OCI-LY7 (cell line): ENCODE measurements at regions of chr6 and their contacts with region 1.

Region 1: GRCh38 chr6:72622094-72622940 is 453 bp downstream of the KCNQ5 start:
- DNase-seq: peak; percentile 86
- H3K4me3 ChIP-seq: peak overlapping the region; percentile 92
- H3K27ac ChIP-seq: peak overlapping the region; percentile 96
- H3K4me1 ChIP-seq: peaks cover 43% of the 10 kb centered on the region
- CTCF ChIP-seq: peak; percentile 48; the same call in 1 of the 2 replicates

Region 2: DNA sequence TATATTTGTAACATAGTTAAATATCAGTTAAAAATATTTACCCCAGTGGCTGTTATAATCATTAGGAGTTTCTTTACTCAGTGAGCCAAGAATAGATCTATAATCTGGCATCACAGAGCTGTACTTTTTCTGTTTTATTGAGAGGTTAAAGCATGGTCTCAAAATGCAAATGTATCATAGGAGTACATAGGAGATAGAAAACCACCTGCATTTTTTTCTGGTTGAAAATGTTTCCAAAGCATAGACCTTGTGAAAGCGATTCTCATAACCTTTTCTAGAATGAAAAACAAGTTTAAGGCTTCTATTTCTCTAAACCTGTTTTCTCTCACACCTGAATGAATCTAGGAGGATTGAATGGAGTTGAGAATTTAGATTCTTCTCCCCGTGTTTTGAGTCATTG is 13.9 kb after region 1 on chr6:
- CTCF ChIA-PET with region 1: no interaction called
- POLR2A ChIA-PET with region 1: interaction called, 27 read pairs
- intact Hi-C with region 1: no loop called
- DNase-seq: no peak
- H3K4me3 ChIP-seq: no peak overlapping the region
- H3K27ac ChIP-seq: no peak overlapping the region
- H3K4me1 ChIP-seq: peaks cover 9% of the 10 kb centered on the region
- CTCF ChIP-seq: no peak

Region 3: GRCh38 chr6:72968704-72969103 is 346.4 kb after region 1 on chr6:
- CTCF ChIA-PET with region 1: no interaction called
- POLR2A ChIA-PET with region 1: no interaction called
- intact Hi-C with region 1: no loop called
- DNase-seq: no peak
- H3K4me3 ChIP-seq: no peak overlapping the region
- H3K27ac ChIP-seq: no peak overlapping the region
- H3K4me1 ChIP-seq: no peaks in the 10 kb centered on the region
- CTCF ChIP-seq: no peak

Region 4: GRCh38 chr6:73180763-73181619 is 558.7 kb after region 1 on chr6:
- CTCF ChIA-PET with region 1: interaction called, 4 read pairs
- POLR2A ChIA-PET with region 1: interaction called, 9 read pairs
- intact Hi-C with region 1: loop called (anchors 1 kb)
- DNase-seq: peak; percentile 81
- H3K4me3 ChIP-seq: peak overlapping the region; percentile 48
- H3K27ac ChIP-seq: peak overlapping the region; percentile 46
- H3K4me1 ChIP-seq: peaks cover 54% of the 10 kb centered on the region
- CTCF ChIP-seq: peak; percentile 97

Region 5: DNA sequence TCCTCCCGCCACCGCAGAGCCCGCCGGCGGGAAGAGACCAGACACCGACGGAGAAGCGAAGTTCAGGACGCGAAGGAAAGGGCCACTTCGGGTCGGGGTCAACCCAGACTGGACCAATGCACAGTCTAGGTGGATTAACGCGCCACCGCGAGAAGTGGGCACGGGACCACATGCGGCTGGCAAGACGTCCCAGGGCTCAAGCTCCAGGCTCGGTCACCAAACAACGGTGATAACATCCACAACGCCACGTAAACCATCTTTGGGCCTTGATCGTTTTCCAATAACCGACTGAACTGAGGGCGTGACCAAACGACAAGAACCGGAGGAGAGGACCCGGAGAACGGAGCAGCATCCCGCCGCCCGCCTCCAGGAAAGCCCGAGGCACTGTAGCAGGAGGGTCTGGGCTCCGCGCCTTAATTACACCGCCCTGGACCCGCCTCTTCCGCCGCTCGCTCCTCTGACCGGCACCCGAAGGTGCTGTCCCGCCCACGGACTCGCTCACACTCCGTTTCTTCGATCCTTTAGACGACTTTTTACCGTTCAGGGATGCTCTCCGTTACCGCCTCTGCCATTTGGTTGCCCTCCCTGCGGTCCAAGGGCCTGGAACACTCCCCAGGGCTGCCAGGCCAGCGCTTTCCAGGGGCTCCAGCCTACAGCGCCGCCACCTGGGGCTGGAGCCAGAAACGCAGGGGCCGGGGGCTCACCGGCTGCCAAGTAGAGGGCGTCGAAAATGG is 687.6 kb after region 1 on chr6:
- CTCF ChIA-PET with region 1: no interaction called
- POLR2A ChIA-PET with region 1: interaction called, 10 read pairs
- intact Hi-C with region 1: loop called (anchors 2 kb)
- DNase-seq: peak; percentile 81
- H3K4me3 ChIP-seq: peak overlapping the region; percentile 75
- H3K27ac ChIP-seq: peak overlapping the region; percentile 65
- H3K4me1 ChIP-seq: peaks cover 24% of the 10 kb centered on the region
- CTCF ChIP-seq: peak; percentile 89

Region 6: DNA sequence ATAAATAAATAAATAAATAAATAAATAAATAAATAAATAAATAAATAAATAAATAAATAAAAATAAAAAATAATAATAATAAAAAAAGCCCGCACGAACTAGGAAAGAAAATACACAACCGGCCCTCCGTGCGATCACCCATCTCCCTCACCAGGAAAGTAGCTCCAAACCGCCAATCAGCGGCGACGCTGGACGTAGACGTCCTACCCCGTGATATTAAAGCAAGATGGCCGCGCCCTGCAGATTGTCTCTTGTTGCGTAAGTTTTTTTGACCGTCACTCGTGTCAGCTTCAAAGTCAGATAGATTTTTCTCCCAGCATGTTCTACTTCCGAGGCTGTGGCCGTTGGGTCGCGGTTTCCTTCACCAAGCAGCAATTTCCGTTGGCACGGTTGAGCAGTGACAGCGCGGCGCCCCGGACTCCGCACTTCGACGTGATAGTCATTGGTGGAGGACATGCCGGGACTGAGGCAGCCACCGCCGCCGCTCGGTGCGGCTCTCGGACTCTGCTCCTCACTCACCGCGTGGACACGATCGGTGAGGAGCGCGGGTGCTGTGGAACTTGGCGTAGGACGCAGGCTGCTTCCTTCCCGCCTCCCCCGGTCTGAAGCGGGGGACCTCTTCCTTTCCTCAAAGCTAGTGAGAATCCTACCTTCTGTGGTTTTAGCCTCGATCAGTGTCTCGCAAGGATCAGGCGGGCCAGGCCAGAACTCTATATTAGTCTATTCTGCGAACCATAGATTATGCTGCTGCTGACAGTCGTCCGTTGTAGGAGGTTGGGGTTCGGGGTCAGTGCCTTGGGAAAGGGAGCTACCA is 839.4 kb after region 1 on chr6 and contains the start of gene MTO1:
- CTCF ChIA-PET with region 1: no interaction called
- POLR2A ChIA-PET with region 1: interaction called, 3 read pairs
- intact Hi-C with region 1: loop called (anchors 5 kb)
- DNase-seq: peak; percentile 95
- H3K4me3 ChIP-seq: peak within 1 kb of the TSS; percentile 99
- H3K27ac ChIP-seq: peak within 1 kb of the TSS; percentile 99
- H3K4me1 ChIP-seq: peaks cover 32% of the 10 kb centered on the region
- CTCF ChIP-seq: no peak
- total RNA-seq, gene MTO1: 44.0 and 63.8 TPM in 2 replicates

Region 7: DNA sequence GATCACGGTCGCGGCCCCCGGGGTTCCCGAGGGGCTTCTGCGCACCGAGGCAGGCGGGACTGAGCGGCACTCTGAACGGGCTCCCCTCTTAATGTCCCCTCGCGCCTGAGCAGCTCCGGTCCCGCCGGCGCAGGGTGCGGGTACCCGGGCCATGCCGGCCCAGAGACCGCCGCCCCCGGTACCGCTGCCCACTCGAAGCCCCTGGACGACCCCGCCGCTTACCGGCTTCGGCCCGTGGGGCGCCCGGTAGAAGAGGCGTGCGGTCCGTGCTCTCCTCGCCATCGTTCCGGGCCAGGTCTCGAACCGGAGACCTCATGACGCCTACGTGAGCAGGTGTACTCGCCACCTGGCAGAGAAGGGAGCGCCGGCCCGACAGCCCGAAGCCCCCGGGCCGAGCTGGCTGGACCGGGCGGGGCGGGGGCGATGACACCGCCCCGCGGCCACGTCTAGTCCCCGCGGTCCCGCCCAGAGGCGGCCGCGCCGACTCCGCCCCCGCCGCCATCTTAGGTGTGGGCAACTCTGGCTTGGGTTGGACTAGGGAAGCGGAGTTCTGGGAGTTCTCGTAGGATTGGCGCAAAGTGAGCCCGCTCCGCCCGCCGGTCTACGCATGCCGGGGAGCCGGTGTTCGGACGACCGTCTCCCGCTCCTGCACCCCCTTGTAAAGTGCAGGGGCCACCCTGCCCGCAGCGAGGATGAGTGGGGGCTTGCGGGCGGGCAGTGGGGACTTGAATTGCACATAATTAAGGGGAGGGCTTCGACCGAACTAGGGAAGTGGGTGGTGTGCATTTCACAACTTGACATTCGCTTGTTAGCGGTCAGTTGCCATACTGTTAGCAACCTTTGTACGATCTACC is 1031.5 kb after region 1 on chr6 and contains the start of gene SLC17A5:
- CTCF ChIA-PET with region 1: no interaction called
- POLR2A ChIA-PET with region 1: no interaction called
- intact Hi-C with region 1: loop called (anchors 5 kb)
- DNase-seq: peak; percentile 93
- H3K4me3 ChIP-seq: peak within 1 kb of the TSS; percentile 96
- H3K27ac ChIP-seq: peak within 1 kb of the TSS; percentile 83
- H3K4me1 ChIP-seq: peaks cover 19% of the 10 kb centered on the region
- CTCF ChIP-seq: no peak
- total RNA-seq, gene SLC17A5: 7.4 and 8.5 TPM in 2 replicates